Activated CD4-positive, alpha-beta memory T cell treated with anti-CD3 and anti-CD28 coated beads for 36 hours (primary cell): ENCODE measurements at regions of chr18 and their contacts with region 1.

Region 1: DNA sequence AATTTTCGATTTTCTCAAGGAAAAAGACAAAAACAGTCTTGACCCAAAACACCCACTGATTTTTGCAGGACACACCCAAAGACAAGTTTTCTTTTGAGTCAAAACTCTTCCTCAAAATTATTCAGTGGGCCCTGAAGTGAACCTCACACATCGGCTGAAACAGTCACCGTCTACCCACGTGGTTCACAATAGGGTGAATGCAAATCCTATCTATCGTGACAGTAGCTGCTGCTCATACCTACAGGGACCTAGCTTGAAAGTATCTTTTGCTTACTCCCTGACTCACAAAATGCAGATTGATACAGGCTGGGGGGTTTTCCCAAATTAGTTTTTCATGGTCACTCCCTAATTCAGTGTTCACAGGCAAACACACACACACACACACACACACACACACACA is 10.7 kb upstream of the CD226 start:
- DNase-seq: peak; percentile 73
- H3K4me3 Mint-ChIP-seq: no peak overlapping the region
- H3K27ac Mint-ChIP-seq: no peak overlapping the region
- H3K4me1 Mint-ChIP-seq: peaks cover 20% of the 10 kb centered on the region
- H3K27me3 Mint-ChIP-seq: no peaks in the 10 kb centered on the region

Region 2: GRCh38 chr18:68714609-68715496 is 1243.6 kb before region 1 on chr18 and contains the start of gene TMX3:
- CTCF ChIA-PET with region 1: no interaction called
- POLR2A ChIA-PET with region 1: no interaction called
- intact Hi-C with region 1: loop called (anchors 10 kb)
- DNase-seq: peak; percentile 94
- H3K4me3 Mint-ChIP-seq: peak within 1 kb of the TSS; percentile 97
- H3K27ac Mint-ChIP-seq: peak within 1 kb of the TSS; percentile 93
- H3K4me1 Mint-ChIP-seq: peaks cover 42% of the 10 kb centered on the region
- H3K27me3 Mint-ChIP-seq: no peaks in the 10 kb centered on the region
- total RNA-seq, gene TMX3: 42.4 to 44.6 TPM

Region 3: DNA sequence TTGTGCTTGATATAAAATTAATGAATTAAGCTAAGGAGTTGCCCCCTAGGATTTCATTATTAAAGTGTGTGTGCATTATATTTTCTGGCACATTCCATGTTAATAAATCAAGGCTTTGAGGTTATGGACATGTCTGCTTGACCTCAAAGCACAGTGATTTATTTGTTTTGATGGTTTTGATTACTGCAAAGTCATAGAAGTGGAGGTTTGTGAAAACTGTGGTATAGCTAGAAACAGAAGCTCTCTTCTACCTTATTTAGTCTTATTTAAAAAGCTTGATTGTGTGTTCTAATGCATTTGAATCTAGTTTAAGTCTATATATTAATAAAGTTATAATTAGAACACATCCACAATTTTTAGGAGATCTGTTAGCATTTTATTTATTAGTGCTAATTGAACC is 525.6 kb before region 1 on chr18:
- CTCF ChIA-PET with region 1: no interaction called
- POLR2A ChIA-PET with region 1: no interaction called
- intact Hi-C with region 1: no loop called
- DNase-seq: no peak
- H3K4me3 Mint-ChIP-seq: no peak overlapping the region
- H3K27ac Mint-ChIP-seq: no peak overlapping the region
- H3K4me1 Mint-ChIP-seq: no peaks in the 10 kb centered on the region
- H3K27me3 Mint-ChIP-seq: peaks cover 2% of the 10 kb centered on the region

Region 4: DNA sequence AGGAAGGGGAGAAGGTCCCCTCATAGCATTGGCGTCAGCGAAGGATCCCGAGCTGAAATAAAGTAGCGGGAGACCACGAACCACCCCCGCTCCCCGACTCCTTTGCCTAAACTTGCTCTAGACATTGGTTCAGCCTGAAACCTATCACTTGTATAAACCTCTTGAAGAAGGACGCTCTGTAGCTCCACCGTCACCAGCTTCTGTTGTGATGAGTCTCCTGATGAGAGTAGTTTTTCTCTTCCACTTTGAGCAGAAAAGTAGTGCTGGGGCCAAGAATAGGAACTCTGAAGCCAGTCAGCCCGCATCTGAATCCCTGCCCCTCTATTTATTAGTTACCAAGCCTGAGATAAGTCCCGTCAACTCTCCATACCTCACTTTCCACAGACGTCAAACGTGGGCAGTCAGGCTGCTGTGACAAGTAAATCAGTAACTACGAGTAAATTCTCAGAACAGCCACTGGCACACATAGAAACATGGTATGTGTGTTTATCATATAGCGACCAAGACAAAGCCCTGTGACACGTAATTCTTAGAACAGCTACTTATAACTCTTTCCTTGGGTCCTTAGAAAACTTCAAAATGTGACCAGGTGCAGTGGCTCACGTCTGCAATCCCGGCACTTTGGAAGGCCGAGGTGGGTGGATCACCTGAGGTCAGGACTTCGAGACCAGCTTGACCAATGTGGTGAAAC is 72.4 kb before region 1 on chr18:
- CTCF ChIA-PET with region 1: interaction called, 9 read pairs
- POLR2A ChIA-PET with region 1: interaction called, 34 read pairs
- intact Hi-C with region 1: loop called (anchors 1 kb)
- DNase-seq: peak; percentile 85
- H3K4me3 Mint-ChIP-seq: peak overlapping the region; percentile 73
- H3K27ac Mint-ChIP-seq: peak overlapping the region; percentile 97
- H3K4me1 Mint-ChIP-seq: peaks cover 86% of the 10 kb centered on the region
- H3K27me3 Mint-ChIP-seq: no peaks in the 10 kb centered on the region

Region 5: DNA sequence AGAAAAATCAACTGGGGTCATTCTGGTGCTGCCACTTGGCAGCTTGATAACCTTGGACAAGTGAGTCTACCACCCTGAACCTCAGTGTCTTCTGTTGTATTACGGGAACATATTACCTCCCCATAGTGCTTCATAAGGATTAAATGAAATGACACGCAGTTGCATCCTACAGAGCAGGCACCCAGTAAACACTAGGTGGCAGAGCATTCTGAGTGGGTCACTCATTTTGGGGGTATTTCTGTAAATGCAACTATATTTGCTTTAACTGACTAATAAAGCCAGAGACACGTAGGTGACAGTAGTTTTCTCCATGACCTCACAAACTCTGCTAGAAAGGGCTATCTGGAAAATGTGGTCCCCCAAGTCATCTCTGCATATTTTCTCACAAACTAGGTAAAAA is 15.4 kb before region 1 on chr18:
- CTCF ChIA-PET with region 1: interaction called, 18 read pairs
- POLR2A ChIA-PET with region 1: interaction called, 82 read pairs
- intact Hi-C with region 1: loop called (anchors 1 kb)
- DNase-seq: peak; percentile 50
- H3K4me3 Mint-ChIP-seq: peak overlapping the region; percentile 63
- H3K27ac Mint-ChIP-seq: peak overlapping the region; percentile 94
- H3K4me1 Mint-ChIP-seq: peaks cover 84% of the 10 kb centered on the region
- H3K27me3 Mint-ChIP-seq: no peaks in the 10 kb centered on the region

Region 6: DNA sequence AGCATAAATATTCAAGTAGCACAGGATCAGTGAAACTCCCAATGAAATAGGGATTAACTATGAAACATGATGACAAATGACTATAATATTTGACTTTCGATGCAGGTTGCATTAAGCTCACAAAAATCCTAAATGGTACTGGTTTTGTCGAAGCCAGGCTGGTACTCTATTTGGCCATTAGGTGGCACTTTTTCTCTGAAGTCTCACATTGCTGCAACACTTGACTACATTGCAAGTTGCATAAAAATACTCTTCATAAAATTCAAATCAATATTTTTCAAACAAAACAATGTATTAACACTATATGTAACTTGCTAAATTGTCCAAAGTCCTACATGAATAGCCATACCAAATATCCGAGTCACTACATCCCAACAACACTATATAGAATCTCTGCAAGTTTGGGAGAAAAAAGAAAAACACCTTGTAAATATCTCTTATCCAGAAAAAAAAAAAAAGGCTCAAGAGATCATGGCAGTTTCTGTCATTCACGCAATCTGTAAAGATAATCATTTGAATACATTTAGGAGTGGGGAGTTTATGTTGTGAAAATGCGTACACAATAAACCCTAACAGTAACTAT is 237.5 kb after region 1 on chr18:
- CTCF ChIA-PET with region 1: no interaction called
- POLR2A ChIA-PET with region 1: interaction called, 4 read pairs
- intact Hi-C with region 1: loop called (anchors 1 kb)
- DNase-seq: peak; percentile 16
- H3K4me3 Mint-ChIP-seq: no peak overlapping the region
- H3K27ac Mint-ChIP-seq: no peak overlapping the region
- H3K4me1 Mint-ChIP-seq: peaks cover 33% of the 10 kb centered on the region
- H3K27me3 Mint-ChIP-seq: no peaks in the 10 kb centered on the region

Region 7: GRCh38 chr18:71116535-71116934 is 1158.1 kb after region 1 on chr18:
- CTCF ChIA-PET with region 1: no interaction called
- POLR2A ChIA-PET with region 1: no interaction called
- intact Hi-C with region 1: no loop called
- DNase-seq: no peak
- H3K4me3 Mint-ChIP-seq: no peak overlapping the region
- H3K27ac Mint-ChIP-seq: no peak overlapping the region
- H3K4me1 Mint-ChIP-seq: no peaks in the 10 kb centered on the region
- H3K27me3 Mint-ChIP-seq: no peaks in the 10 kb centered on the region